ENCODE measurements at regions of chr1 and their contacts with region 1.

Region 1: GRCh38 chr1:233790662-233791375 is 113.7 kb upstream of the SLC35F3 start:
- DNase-seq: peak in 3 of 5 donors; percentile 18 to 40 (median 24)
- ATAC-seq: peak; percentile 47 to 89 (median 84)
- H3K4me3 ChIP-seq: no peak overlapping the region
- H3K27ac ChIP-seq: no peak overlapping the region
- H3K4me1 ChIP-seq: no peaks in the 10 kb centered on the region
- H3K27me3 ChIP-seq: no peaks in the 10 kb centered on the region
- CTCF ChIP-seq: peak; percentile 74 to 89 (median 82)
- POLR2A ChIP-seq: no peak

Region 2: DNA sequence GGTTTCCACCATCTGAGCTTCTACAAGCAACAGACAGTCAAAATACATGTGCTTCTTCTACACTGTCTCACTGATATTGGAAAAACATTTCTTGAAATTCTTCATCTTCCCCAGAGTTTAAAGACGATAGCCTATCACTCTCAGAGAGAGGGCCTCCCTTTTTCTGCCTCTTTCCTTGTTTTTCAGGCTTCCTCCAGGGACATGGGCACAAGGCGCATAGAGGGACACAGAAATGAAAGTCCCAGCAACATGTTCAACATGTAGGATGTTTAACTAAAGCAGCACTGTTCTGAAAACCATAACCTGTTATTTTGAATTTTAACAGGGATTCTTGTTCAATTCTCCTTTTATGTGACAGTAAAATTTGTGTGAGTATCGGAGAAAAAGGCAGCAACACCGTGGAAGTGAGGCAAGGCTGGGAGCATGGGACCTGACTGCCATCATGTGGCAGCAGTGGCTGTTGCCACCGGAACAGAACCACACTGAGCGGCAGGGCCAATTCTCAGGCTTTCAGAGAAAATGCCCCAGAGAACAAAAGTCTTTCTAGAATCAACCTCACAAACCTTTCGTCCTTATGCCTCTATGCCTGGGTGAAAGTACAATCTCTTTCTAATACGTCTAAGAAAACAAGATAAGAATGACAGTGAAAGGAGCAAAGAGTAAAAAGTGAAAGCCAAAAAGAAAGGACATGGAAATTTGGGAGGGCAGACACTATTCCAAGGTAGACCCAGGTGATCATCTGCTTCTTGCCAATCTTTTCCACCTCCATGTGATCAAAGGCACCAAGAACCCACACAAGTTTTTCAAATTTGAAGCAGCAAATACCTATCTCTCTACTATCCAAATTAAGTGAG is 549.8 kb before region 1 on chr1:
- intact Hi-C with region 1: no loop called
- DNase-seq: peak; percentile 56 to 72 (median 62)
- ATAC-seq: peak; percentile 83 to 94 (median 92)
- H3K4me3 ChIP-seq: peak overlapping the region in 7 of 12 donors; percentile 8 to 17 (median 11)
- H3K27ac ChIP-seq: no peak overlapping the region
- H3K4me1 ChIP-seq: peaks cover 0 to 25% (median 6%) of the 10 kb centered on the region in 12 donors
- H3K27me3 ChIP-seq: no peaks in the 10 kb centered on the region
- CTCF ChIP-seq: peak; percentile 67 to 91 (median 82)
- POLR2A ChIP-seq: no peak

Region 3: GRCh38 chr1:233304489-233305102 is 486.2 kb before region 1 on chr1:
- intact Hi-C with region 1: loop called in 1 of 10 experiments (anchors 10 kb)
- DNase-seq: no peak
- ATAC-seq: no peak
- H3K4me3 ChIP-seq: no peak overlapping the region
- H3K27ac ChIP-seq: no peak overlapping the region
- H3K4me1 ChIP-seq: no peaks in the 10 kb centered on the region
- H3K27me3 ChIP-seq: peaks cover 0 to 9% (median 0%) of the 10 kb centered on the region in 9 donors
- CTCF ChIP-seq: peak; percentile 46 to 83 (median 70)
- POLR2A ChIP-seq: no peak

Region 4: GRCh38 chr1:233394860-233395717 is 395.7 kb before region 1 on chr1:
- intact Hi-C with region 1: loop called in 1 of 10 experiments (anchors 10 kb)
- DNase-seq: no peak
- ATAC-seq: peak in 3 of 4 donors; percentile 68 to 82 (median 69)
- H3K4me3 ChIP-seq: no peak overlapping the region
- H3K27ac ChIP-seq: no peak overlapping the region
- H3K4me1 ChIP-seq: peaks cover 0 to 8% (median 0%) of the 10 kb centered on the region in 12 donors
- H3K27me3 ChIP-seq: peaks cover 0 to 22% (median 8%) of the 10 kb centered on the region in 9 donors
- CTCF ChIP-seq: peak; percentile 49 to 80 (median 62)
- POLR2A ChIP-seq: no peak

Region 5: GRCh38 chr1:233440951-233441401 is 349.8 kb before region 1 on chr1:
- intact Hi-C with region 1: loop called (anchors 1 to 5 kb)
- DNase-seq: no peak
- ATAC-seq: peak in 2 of 4 donors; percentile 20 to 49
- H3K4me3 ChIP-seq: no peak overlapping the region
- H3K27ac ChIP-seq: no peak overlapping the region
- H3K4me1 ChIP-seq: no peaks in the 10 kb centered on the region
- H3K27me3 ChIP-seq: peaks cover 0 to 24% (median 5%) of the 10 kb centered on the region in 9 donors
- CTCF ChIP-seq: peak; percentile 28 to 72 (median 60)
- POLR2A ChIP-seq: no peak

Region 6: GRCh38 chr1:233518349-233518748 is 272.5 kb before region 1 on chr1:
- intact Hi-C with region 1: loop called (anchors 2 to 10 kb)
- DNase-seq: no peak
- ATAC-seq: no peak
- H3K4me3 ChIP-seq: no peak overlapping the region
- H3K27ac ChIP-seq: no peak overlapping the region
- H3K4me1 ChIP-seq: no peaks in the 10 kb centered on the region
- H3K27me3 ChIP-seq: no peaks in the 10 kb centered on the region
- CTCF ChIP-seq: peak; percentile 32 to 61 (median 48)
- POLR2A ChIP-seq: no peak

Region 7: DNA sequence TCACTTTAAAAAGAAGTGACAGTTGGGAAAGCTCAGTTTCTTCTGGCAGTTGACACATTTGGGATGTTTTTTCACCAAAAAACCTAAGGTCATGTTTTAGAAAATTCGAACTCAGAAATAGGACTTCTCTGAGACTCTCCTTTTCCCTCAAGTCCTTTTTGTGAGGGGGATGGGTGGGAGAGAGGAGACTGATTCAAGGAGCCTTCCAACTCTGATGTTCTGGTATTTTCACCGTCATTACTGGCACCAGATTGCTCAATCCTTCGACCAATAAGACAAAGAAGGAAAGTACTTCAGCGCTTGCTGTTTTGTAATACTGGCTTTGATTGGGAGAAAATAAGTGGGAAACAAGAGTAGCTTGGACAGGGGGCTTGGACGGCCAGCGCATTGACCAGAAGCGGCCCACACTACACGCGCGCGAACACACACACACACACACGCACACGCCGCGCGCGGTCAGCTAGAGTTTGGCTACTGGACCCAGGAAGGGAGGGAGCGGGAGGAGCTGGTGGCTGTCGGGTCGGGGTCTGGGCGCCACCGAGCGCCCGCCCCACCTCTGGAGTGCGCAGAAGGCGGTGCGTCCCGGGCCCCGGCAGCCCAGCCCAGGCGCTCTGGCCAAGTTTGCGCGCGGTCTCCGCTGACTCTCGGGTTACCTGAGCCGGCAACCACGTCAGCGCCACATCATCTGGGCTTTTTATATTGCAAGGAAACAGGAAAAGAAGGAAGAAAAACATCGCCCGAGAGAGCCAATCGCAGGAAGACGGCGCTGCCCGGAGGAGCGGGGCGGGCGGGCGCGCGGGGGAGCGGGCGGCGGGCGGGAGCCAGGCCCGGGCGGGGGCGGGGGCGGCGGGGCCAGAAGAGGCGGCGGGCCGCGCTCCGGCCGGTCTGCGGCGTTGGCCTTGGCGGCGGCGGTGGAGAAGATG is 177.3 kb before region 1 on chr1 and contains the start of gene KCNK1:
- intact Hi-C with region 1: loop called in 1 of 10 experiments (anchors 5 kb)
- DNase-seq: peak; percentile 25 to 69 (median 64)
- ATAC-seq: peak; percentile 72 to 87 (median 83)
- H3K4me3 ChIP-seq: peak within 1 kb of the TSS; percentile 46 to 78 (median 63)
- H3K27ac ChIP-seq: peak within 1 kb of the TSS in 9 of 12 donors; percentile 42 to 68 (median 61)
- H3K4me1 ChIP-seq: peaks cover 0 to 15% (median 0%) of the 10 kb centered on the region in 12 donors
- H3K27me3 ChIP-seq: peaks cover 0 to 48% (median 4%) of the 10 kb centered on the region in 9 donors
- CTCF ChIP-seq: no peak
- POLR2A ChIP-seq: peak in 1 of 2 donors; percentile 45
- total RNA-seq, gene KCNK1: 5.9 to 28.3 (median 10.5) TPM

Region 8: DNA sequence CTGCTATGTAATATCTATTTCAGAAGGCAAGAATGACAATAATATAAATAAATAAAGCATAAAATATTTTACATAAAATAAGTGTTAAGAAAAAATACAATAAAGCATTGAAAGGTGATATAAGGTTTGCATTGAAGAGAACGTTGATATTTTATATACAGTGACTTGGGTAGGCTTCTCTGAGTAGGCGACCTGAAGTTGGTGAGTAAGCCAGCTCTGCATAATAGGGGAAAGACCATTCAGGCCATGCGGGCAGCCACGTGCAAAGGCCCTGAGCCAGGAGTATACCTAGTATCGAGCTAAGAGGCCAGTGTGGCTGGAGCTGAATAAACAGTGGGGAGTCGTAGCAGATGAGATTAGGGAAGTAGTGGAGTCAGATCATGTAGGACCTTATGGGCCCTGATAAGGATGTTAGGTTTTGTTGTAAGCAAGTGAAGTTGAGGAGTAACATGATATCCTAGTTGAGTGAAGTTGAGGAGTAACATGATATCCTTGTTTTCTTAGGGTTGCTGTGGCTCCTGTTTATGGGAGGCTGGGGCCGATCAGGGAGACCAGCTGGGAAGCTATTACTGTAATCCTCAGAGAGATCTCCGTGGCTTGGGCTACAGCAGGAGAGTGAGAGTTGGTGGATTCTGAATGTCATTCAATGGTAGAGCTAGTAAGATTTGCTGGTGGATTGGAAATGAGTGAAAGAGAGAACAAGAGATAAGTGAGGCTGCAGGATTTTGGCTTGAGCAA is 154.9 kb before region 1 on chr1:
- intact Hi-C with region 1: loop called in 1 of 10 experiments (anchors 10 kb)
- DNase-seq: no peak
- ATAC-seq: no peak
- H3K4me3 ChIP-seq: no peak overlapping the region
- H3K27ac ChIP-seq: no peak overlapping the region
- H3K4me1 ChIP-seq: no peaks in the 10 kb centered on the region
- H3K27me3 ChIP-seq: no peaks in the 10 kb centered on the region
- CTCF ChIP-seq: no peak
- POLR2A ChIP-seq: no peak